ENCODE measurements at regions of chr12 and their contacts with region 1.

Region 1: DNA sequence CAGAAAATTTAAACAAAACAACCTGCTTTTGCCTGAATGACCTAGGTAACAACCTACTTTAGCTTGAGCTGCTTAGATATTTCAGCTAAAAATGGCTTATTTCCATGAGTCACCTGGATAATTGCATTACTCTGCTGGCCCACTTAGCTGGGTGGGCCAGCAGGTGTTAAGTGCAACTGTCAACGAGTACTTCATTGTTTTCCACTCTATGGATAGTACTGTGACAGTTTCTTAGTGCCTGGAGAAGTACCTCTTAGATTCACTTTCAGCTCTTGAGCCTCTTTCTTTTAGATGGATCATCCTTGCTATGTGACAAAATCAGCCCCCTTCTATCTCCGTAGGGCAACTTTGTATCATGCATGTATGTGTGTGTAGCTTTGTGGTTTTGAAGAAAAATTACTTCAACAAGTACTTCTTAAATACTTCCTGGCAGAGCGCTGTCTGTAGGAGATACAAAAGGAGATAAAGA is 368.2 kb upstream of the ATP2B1 start:
- DNase-seq: no peak
- H3K4me3 Mint-ChIP-seq: no peak overlapping the region
- H3K27ac Mint-ChIP-seq: no peak overlapping the region
- H3K4me1 Mint-ChIP-seq: peaks cover 26% of the 10 kb centered on the region
- H3K27me3 Mint-ChIP-seq: peaks cover 13% of the 10 kb centered on the region

Region 2: DNA sequence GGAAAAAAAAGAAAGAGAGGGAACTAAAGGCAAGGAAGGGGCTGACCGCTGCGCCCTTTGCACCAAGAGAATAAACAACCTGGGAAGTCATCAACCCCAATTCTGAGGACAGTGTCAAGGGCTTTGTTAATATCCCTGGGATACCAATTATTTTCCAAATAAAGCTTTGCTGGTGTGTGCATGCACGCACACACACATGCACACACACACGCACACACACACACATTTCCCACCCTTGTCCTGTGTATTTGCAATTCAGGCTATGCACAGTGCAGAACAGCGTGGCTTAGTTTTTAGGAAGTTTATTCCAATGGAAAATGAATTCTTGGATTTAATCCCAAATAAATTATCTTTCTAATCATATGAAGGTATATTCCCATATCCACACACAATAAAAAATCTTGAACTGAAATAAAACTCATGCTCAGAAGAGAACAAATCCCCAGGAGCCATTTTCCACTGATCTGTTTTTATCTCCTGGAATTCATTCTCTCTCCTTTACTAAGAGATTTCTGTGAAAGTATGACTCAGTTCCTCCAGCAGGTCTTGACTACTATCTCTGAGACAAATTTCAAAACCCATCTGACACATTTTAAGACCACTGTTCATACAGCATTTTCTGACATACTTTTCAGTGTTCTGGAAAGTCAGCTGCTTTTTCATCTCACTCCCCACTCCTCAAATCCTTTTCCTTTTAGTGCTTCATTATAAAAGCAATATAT is 33.8 kb before region 1 on chr12:
- intact Hi-C with region 1: loop called (anchors 2 kb)
- DNase-seq: no peak
- H3K4me3 Mint-ChIP-seq: no peak overlapping the region
- H3K27ac Mint-ChIP-seq: no peak overlapping the region
- H3K4me1 Mint-ChIP-seq: peaks cover 14% of the 10 kb centered on the region
- H3K27me3 Mint-ChIP-seq: no peaks in the 10 kb centered on the region

Measured in activated T-helper 2 cell treated with anti-CD3 and anti-CD28 coated beads, Interferon-gamma antibody, Interleukin-2, Interleukin-4, amounts not matched to agents 10 μg/mL and 5 μg/mL and 100 μg/mL, durations not matched to agents 14 hours and 24 hours and 36 hours (primary cell).